IMR-90 (cell line): ENCODE measurements at regions of chr5 and their contacts with region 1.

Region 1: GRCh38 chr5:164048359-164048926 is 543.0 kb downstream of the MAT2B start:
- DNase-seq: peak; percentile 44
- ATAC-seq: no peak
- H3K4me3 ChIP-seq: no peak overlapping the region
- H3K27ac ChIP-seq: no peak overlapping the region
- H3K4me1 ChIP-seq: no peaks in the 10 kb centered on the region
- H3K27me3 ChIP-seq: no peaks in the 10 kb centered on the region
- CTCF ChIP-seq: peak; percentile 54
- POLR2A ChIP-seq: no peak
- RAD21 ChIP-seq: peak; percentile 58

Region 2: DNA sequence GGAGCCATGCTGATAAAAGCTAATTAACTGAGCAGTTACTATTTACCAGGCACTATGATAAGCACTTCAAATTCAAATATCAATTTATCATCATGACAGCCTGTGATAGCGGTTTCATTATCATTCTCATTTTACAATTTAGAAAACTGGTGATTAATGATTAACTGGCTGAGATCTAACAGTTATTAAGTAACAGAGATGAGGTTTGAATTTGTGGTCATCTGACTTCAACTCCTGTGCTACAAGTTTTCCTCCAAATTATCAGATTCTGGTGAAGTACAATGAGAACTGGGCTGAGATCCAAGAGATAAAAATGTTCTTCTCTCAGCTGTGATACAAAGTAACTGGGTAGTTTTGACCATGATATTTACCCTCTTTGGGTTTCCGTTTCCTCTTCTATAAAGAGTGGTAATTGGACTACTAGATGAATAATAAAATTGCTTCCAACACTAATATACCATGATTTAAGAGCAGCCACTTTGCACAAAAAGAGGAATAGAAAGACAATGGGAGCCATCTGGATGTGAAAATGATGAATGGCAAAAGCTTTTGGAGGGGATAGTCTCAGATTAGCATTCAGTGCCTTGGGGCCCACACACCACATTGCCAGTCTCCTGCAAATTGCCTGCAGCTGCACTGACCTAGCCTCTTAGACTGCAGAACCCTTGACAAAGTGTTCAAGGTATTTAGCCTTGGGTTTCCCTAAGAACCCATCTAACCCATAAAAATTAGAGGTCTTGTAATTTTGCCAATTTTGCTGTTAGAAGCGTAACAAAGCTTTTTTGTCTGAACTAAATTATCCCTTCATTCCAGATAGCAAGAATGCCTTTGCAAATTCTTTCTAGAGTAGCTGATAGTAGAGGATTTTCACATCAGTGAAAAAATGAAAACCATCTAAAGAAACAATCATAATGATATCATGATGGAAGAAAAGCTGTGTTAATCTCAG is 685.3 kb before region 1 on chr5:
- CTCF ChIA-PET with region 1: no interaction called
- POLR2A ChIA-PET with region 1: no interaction called
- dilution Hi-C with region 1: no loop called
- in situ Hi-C with region 1: no loop called
- intact Hi-C with region 1: no loop called
- DNase-seq: no peak
- ATAC-seq: no peak
- H3K4me3 ChIP-seq: no peak overlapping the region
- H3K27ac ChIP-seq: no peak overlapping the region
- H3K4me1 ChIP-seq: no peaks in the 10 kb centered on the region
- H3K27me3 ChIP-seq: no peaks in the 10 kb centered on the region
- CTCF ChIP-seq: no peak
- POLR2A ChIP-seq: no peak
- RAD21 ChIP-seq: no peak

Region 3: DNA sequence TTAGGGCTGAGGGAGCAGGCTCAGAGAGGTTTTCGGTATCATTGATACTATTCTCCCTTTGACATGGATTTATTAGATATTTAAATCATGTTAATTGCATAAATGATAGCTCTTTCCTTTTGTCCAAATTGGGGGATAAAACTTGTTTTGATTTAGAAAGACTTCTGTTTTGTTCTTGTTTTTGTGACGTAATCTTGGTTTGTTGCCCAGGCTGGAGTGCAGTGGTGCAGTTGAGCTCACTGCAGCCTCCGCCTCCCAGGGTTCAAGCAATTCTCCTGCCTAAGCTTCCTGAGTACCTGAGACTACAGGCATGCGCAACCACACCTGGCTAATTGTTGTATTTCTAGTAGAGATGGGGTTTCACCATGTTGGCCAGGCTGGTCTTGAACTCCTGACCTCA is 535.9 kb before region 1 on chr5:
- CTCF ChIA-PET with region 1: no interaction called
- POLR2A ChIA-PET with region 1: no interaction called
- dilution Hi-C with region 1: no loop called
- in situ Hi-C with region 1: no loop called
- intact Hi-C with region 1: no loop called
- DNase-seq: no peak
- ATAC-seq: no peak
- H3K4me3 ChIP-seq: no peak overlapping the region
- H3K27ac ChIP-seq: no peak overlapping the region
- H3K4me1 ChIP-seq: no peaks in the 10 kb centered on the region; the same call in 1 of the 2 replicates
- H3K27me3 ChIP-seq: no peaks in the 10 kb centered on the region
- CTCF ChIP-seq: no peak
- POLR2A ChIP-seq: no peak
- RAD21 ChIP-seq: no peak

Region 4: DNA sequence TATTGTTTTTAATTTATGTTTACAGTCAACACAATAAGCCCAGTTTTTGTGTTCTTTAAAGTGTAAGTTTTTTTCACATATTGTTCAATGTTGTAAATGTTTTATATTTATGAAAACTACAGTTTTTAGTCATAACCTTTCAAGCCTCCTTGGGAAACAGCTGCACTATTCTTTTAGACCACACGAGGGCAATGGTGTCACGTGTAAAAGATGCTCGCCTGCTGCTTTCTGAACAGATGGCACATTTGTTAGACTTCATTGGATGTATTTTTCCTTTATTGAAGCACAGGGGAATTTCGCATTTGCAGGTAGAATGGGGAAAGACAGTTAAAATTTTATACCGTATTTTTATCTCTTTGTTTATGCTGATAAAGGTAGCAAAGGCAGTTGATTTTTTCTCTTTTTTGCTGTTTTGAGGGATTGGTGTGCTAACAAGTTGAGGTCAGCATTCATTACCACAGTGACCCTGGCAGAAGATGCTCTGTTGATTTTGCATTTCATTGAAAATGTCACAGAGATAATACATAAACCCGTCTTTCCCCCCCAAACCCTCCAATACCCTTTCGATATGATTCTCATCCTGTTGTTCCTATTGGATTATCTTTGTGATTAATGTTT is 484.0 kb before region 1 on chr5:
- CTCF ChIA-PET with region 1: no interaction called
- POLR2A ChIA-PET with region 1: no interaction called
- dilution Hi-C with region 1: no loop called
- in situ Hi-C with region 1: no loop called
- intact Hi-C with region 1: loop called (anchors 5 kb)
- DNase-seq: peak; percentile 69
- ATAC-seq: peak; percentile 68
- H3K4me3 ChIP-seq: no peak overlapping the region
- H3K27ac ChIP-seq: no peak overlapping the region
- H3K4me1 ChIP-seq: peaks cover 5% of the 10 kb centered on the region
- H3K27me3 ChIP-seq: no peaks in the 10 kb centered on the region
- CTCF ChIP-seq: peak; percentile 89
- POLR2A ChIP-seq: no peak
- RAD21 ChIP-seq: peak; percentile 91

Region 5: GRCh38 chr5:163635631-163636030 is 412.8 kb before region 1 on chr5:
- CTCF ChIA-PET with region 1: no interaction called
- POLR2A ChIA-PET with region 1: no interaction called
- dilution Hi-C with region 1: no loop called
- in situ Hi-C with region 1: no loop called
- intact Hi-C with region 1: no loop called
- DNase-seq: no peak
- ATAC-seq: no peak
- H3K4me3 ChIP-seq: no peak overlapping the region
- H3K27ac ChIP-seq: no peak overlapping the region
- H3K4me1 ChIP-seq: no peaks in the 10 kb centered on the region
- H3K27me3 ChIP-seq: no peaks in the 10 kb centered on the region
- CTCF ChIP-seq: no peak
- POLR2A ChIP-seq: no peak
- RAD21 ChIP-seq: no peak

Region 6: GRCh38 chr5:164358531-164359259 is 310.3 kb after region 1 on chr5:
- CTCF ChIA-PET with region 1: no interaction called
- POLR2A ChIA-PET with region 1: no interaction called
- dilution Hi-C with region 1: no loop called
- in situ Hi-C with region 1: no loop called
- intact Hi-C with region 1: loop called (anchors 10 kb)
- DNase-seq: peak; percentile 88
- ATAC-seq: peak; percentile 97
- H3K4me3 ChIP-seq: no peak overlapping the region
- H3K27ac ChIP-seq: peak overlapping the region; percentile 7; the same call in 1 of the 2 replicates
- H3K4me1 ChIP-seq: peaks cover 6% of the 10 kb centered on the region
- H3K27me3 ChIP-seq: no peaks in the 10 kb centered on the region
- CTCF ChIP-seq: no peak
- POLR2A ChIP-seq: no peak
- RAD21 ChIP-seq: 0 out of 2 replicates have a peak, but pooled peaks have one; percentile 13

Region 7: DNA sequence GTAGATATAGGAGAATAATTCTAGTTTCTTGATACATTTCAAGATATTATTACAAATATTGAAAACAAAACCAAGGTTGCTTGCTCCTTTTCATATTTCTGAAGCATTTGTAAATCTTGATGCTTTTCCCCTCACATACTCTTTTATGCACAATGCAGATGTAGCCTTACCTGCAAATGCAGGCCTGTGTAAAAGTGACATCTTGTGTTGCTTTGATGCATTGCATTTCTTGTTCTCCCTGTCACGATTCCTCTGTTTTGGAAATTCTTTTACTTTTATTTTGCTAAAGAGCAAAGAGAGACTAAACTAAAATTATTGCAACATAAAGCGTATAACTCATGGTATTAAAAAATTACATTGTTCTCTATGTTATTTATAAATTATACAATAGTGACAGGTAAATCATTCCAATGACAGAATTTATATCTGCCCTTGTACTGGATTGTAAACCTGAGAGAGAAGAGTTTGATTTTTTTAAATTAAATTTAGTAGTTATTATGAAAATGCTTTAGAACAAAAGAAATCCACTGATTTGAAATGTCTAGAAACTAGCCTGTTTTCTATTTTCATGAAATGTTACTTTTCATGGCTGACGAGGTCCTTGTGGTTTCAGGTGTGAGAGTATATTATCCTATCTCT is 427.0 kb after region 1 on chr5:
- CTCF ChIA-PET with region 1: no interaction called
- POLR2A ChIA-PET with region 1: no interaction called
- dilution Hi-C with region 1: no loop called
- in situ Hi-C with region 1: loop called (anchors 10 kb)
- intact Hi-C with region 1: loop called (anchors 1 kb)
- DNase-seq: peak; percentile 56
- ATAC-seq: no peak
- H3K4me3 ChIP-seq: no peak overlapping the region
- H3K27ac ChIP-seq: no peak overlapping the region
- H3K4me1 ChIP-seq: no peaks in the 10 kb centered on the region
- H3K27me3 ChIP-seq: no peaks in the 10 kb centered on the region
- CTCF ChIP-seq: peak; percentile 63
- POLR2A ChIP-seq: no peak
- RAD21 ChIP-seq: peak; percentile 84